CD8-positive, alpha-beta T cell (primary cell): ENCODE measurements at regions of chr13 and their contacts with region 1.

Region 1: GRCh38 chr13:99004978-99005377 is 27.1 kb upstream of the DOCK9 start:
- DNase-seq: no peak
- ATAC-seq: no peak
- H3K4me3 ChIP-seq: no peak overlapping the region
- H3K4me3 Mint-ChIP-seq: no peak overlapping the region
- H3K27ac ChIP-seq: no peak overlapping the region
- H3K27ac Mint-ChIP-seq: no peak overlapping the region
- H3K4me1 ChIP-seq: peaks cover 61% of the 10 kb centered on the region
- H3K4me1 Mint-ChIP-seq: peaks cover 72% of the 10 kb centered on the region
- H3K27me3 ChIP-seq: no peaks in the 10 kb centered on the region
- H3K27me3 Mint-ChIP-seq: no peaks in the 10 kb centered on the region
- CTCF ChIP-seq: no peak

Region 2: DNA sequence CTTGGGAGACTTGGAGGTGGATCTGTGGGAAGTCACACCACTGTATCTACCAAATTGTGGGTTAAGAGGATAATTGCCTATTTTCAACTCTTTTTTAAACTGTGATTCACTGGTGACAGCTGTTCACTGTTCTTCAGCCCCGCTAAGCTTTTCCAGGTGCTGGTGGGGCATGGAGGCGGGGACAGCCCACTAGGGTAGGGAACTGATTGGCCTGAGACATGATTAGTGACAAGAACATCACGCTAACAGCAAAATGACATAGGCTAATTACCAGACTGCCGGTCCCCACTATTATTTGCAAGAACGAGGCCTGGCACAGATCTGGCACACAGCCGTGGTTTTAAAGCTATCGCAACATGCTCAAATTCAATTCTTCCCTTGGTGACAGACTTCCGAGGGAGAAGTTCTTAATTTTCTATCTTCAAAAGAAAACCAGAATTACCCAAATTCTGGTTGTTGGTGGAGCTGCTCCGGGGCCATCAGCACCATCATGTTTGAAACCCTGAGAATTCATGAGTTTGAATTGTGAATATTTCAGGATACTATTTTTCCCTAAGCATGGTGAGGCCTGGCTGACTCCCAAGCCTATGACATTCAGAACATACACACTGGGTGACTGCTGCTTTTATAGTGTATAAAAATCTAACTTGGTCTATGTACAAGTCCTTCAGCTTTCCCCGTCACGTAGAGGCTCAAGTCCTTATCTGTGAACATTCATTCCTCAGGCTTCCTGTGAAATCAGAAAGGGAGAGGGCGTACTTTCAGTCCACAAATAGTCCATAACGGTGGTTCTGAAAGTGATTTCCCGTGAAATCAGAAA is 45.0 kb before region 1 on chr13:
- CTCF ChIA-PET with region 1: no interaction called
- POLR2A ChIA-PET with region 1: no interaction called
- intact Hi-C with region 1: no loop called
- DNase-seq: no peak
- ATAC-seq: no peak
- H3K4me3 ChIP-seq: no peak overlapping the region
- H3K4me3 Mint-ChIP-seq: no peak overlapping the region
- H3K27ac ChIP-seq: no peak overlapping the region
- H3K27ac Mint-ChIP-seq: no peak overlapping the region
- H3K4me1 ChIP-seq: no peaks in the 10 kb centered on the region
- H3K4me1 Mint-ChIP-seq: peaks cover 21% of the 10 kb centered on the region
- H3K27me3 ChIP-seq: no peaks in the 10 kb centered on the region
- H3K27me3 Mint-ChIP-seq: no peaks in the 10 kb centered on the region
- CTCF ChIP-seq: no peak

Region 3: GRCh38 chr13:99015606-99016490 is 10.9 kb after region 1 on chr13:
- CTCF ChIA-PET with region 1: no interaction called
- POLR2A ChIA-PET with region 1: interaction called, 3 read pairs
- intact Hi-C with region 1: loop called in 1 of 2 experiments (anchors 1 kb)
- DNase-seq: peak in 4 of 9 experiments; percentile 17 to 76 (median 42)
- ATAC-seq: peak; percentile 89
- H3K4me3 ChIP-seq: no peak overlapping the region
- H3K4me3 Mint-ChIP-seq: peak overlapping the region; percentile 53
- H3K27ac ChIP-seq: no peak overlapping the region
- H3K27ac Mint-ChIP-seq: peak overlapping the region; percentile 74
- H3K4me1 ChIP-seq: peaks cover 37% of the 10 kb centered on the region
- H3K4me1 Mint-ChIP-seq: peaks cover 76% of the 10 kb centered on the region
- H3K27me3 ChIP-seq: no peaks in the 10 kb centered on the region
- H3K27me3 Mint-ChIP-seq: no peaks in the 10 kb centered on the region
- CTCF ChIP-seq: no peak

Region 4: DNA sequence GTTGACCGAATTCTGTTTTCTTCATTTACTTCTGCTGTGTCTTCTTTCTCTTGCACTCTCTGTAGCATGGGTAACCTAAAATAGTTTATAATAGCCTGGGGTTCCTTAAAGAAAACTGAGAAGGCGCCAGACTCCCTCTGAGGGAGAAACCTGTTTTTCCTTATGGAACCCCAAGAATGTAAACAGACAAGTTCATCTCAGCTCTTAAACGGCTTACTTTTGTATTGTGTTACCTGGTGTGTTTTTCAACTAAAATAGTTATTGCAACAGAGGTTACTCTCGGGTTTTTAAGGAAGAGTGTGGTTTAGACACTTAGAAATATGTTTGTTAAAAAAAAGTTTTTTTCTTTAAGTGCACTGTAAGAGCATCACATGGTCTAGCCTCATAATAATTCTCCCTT is 472.5 kb after region 1 on chr13:
- CTCF ChIA-PET with region 1: no interaction called
- POLR2A ChIA-PET with region 1: no interaction called
- intact Hi-C with region 1: no loop called
- DNase-seq: no peak
- ATAC-seq: no peak
- H3K4me3 ChIP-seq: no peak overlapping the region
- H3K4me3 Mint-ChIP-seq: no peak overlapping the region
- H3K27ac ChIP-seq: no peak overlapping the region
- H3K27ac Mint-ChIP-seq: no peak overlapping the region
- H3K4me1 ChIP-seq: no peaks in the 10 kb centered on the region
- H3K4me1 Mint-ChIP-seq: peaks cover 3% of the 10 kb centered on the region
- H3K27me3 ChIP-seq: no peaks in the 10 kb centered on the region
- H3K27me3 Mint-ChIP-seq: no peaks in the 10 kb centered on the region
- CTCF ChIP-seq: no peak